ENCODE measurements at regions of chr5 and their contacts with region 1.

Region 1: DNA sequence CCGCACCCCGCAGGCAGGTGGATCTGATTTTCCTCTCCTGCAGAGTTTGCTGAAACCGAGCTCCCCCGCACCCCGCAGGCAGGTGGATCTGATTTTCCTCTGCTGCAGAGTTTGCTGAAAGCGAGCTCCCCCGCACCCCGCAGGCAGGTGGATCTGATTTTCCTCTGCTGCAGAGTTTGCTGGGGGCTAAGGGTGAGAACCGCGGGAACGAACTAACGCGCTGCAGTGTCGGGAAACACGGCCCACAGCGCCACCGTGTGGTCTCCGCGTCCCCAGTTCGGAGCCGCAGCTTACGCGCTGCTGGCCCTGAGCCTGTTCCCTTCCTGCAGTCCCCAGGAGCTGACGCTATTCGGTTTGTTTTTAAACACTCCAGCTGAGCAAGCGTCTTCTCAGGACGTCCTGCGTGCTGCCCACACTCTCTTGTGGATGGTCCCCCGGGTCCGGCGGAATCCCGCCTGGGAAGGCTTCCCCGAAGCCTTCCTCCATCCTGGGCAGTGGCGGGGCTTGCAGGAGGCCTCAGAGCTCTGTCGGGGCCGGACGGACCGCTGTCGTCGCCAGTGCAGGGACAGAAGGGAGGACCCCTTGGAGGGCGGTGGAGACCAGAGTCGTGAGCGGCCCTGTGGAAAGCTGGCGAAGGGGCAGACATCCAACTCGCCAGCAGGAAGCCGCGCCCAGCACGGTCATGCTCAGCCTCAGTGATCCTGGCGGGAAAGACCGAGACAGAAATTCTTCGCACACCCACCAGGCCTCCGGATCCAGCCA is 121.2 kb upstream of the LPCAT1 start:
- DNase-seq: peak; percentile 52
- H3K4me3 ChIP-seq: no peak overlapping the region
- H3K27ac ChIP-seq: no peak overlapping the region
- H3K27me3 ChIP-seq: peaks cover 38% of the 10 kb centered on the region
- CTCF ChIP-seq: peak; percentile 81

Region 2: GRCh38 chr5:932628-933250 is 712.3 kb before region 1 on chr5:
- CTCF ChIA-PET with region 1: interaction called, 12 read pairs
- POLR2A ChIA-PET with region 1: no interaction called
- DNase-seq: no peak
- H3K4me3 ChIP-seq: no peak overlapping the region
- H3K27ac ChIP-seq: no peak overlapping the region
- H3K27me3 ChIP-seq: peaks cover 28% of the 10 kb centered on the region
- CTCF ChIP-seq: no peak

Region 3: DNA sequence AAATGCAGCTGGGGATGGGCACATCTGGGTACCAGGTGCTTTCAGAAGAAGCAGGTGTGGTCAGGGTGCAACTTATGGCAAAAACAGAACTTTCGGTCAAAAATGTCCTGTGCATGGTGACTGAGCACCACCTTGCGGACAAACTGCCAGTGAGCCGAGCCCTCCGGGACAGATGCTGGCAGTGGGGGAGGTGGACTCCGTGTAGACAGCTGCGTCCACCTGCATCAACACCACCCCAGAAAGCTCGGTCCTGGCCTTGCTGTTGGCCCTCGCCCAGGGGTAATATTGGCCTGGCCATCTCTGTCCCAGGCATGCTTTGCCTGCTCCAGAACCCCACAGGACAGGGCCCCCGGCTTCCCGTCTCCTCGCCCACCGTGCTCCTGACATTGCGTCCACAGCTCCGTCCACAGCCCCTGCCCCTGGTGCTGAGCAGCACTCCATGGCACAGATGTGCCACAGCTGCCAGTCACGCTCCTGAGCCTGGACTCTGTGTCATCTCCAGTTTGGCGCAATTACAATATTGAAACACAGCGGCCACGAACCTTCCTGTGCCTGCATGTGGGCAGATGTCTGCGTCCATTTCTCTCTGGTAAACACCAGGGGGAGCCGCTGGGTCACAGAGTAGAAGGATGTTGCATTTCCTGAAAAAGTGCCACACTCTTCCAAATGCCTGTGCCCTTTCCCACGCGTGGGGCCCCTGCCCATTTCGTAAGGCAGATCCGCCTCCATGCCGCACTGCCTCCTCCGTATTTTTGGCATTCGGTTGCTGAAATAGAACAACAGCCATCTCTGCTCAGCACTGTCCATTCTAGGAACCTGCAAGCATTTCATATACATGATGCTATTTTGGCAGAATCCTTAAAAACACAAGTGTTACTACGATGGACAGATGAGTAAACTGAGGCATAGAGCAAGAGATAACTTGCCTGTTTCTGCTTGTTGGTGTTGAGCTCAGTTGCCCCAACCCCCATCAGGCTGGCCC is 477.0 kb before region 1 on chr5:
- CTCF ChIA-PET with region 1: interaction called, 23 read pairs
- POLR2A ChIA-PET with region 1: no interaction called
- DNase-seq: no peak
- H3K4me3 ChIP-seq: no peak overlapping the region
- H3K27ac ChIP-seq: no peak overlapping the region
- H3K27me3 ChIP-seq: peaks cover 6% of the 10 kb centered on the region
- CTCF ChIP-seq: peak; percentile 79

Region 4: GRCh38 chr5:1208743-1209506 is 436.1 kb before region 1 on chr5:
- CTCF ChIA-PET with region 1: interaction called, 14 read pairs
- POLR2A ChIA-PET with region 1: no interaction called
- DNase-seq: no peak
- H3K4me3 ChIP-seq: no peak overlapping the region
- H3K27ac ChIP-seq: no peak overlapping the region
- H3K27me3 ChIP-seq: peaks cover 10% of the 10 kb centered on the region
- CTCF ChIP-seq: peak; percentile 50

Region 5: DNA sequence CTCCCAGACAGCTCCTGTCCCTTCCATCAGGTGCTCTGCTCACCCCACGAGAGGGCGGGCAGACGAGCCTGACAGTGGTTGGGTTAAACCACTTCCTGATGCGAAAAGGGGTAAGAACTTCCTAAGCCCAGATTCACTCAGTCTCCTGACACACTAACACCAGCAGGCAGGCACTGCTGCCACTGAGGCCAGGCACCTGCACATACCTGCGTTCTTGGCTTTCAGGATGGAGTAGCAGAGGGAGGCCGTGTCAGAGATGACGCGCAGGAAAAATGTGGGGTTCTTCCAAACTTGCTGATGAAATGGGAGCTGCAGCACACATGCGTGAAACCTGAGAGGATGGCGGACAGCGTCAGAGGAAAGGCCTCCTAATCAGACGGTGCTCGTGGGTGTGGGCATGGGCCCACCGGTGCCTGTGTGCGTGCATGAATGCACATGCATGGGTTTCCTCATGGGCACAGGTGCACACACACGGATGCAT is 389.9 kb before region 1 on chr5:
- CTCF ChIA-PET with region 1: no interaction called
- POLR2A ChIA-PET with region 1: no interaction called
- DNase-seq: no peak
- H3K4me3 ChIP-seq: no peak overlapping the region
- H3K27ac ChIP-seq: no peak overlapping the region
- H3K27me3 ChIP-seq: no peaks in the 10 kb centered on the region
- CTCF ChIP-seq: no peak

Region 6: DNA sequence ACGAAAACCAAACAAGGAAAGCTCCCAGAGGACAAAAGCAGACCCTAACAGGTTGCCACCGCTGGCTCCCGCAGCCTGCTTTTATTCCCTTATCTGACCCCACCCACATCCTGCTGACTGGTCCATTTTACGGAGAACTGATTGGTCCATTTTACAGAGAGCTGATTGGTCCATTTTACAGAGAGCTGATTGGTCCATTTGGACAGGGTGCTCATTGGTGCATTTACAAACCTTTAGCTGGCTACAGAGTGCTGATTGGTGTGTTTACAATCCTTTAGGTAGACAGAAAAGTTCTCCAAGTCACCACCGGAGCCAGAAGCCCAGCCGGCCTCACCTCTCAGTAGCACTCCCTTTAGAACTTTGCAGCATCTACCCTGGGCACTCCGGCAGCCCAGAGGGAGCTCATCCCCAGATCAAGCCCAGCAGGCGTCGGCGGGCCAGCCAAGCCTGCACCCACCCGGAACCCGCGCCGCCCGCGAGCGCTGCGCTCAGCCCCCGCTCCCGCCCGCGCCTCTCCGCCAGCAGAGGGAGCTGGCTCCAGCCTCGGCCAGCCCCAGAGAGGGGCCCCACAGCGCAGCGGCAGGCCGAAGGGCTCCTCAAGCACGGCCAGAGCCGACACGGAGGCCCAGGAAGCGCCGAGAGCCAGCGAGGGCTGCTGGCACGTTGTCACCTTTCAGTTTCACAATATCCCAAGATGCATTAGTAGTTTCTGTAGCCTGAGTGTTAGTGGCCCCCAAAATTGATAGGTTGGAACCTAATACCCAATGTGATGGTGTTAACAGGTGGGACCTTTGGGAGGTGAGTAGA is 264.8 kb before region 1 on chr5:
- CTCF ChIA-PET with region 1: interaction called, 13 read pairs
- POLR2A ChIA-PET with region 1: no interaction called
- DNase-seq: no peak
- H3K4me3 ChIP-seq: no peak overlapping the region
- H3K27ac ChIP-seq: no peak overlapping the region
- H3K27me3 ChIP-seq: peaks cover 7% of the 10 kb centered on the region
- CTCF ChIP-seq: peak; percentile 46

Region 7: GRCh38 chr5:1479581-1480188 is 165.3 kb before region 1 on chr5:
- CTCF ChIA-PET with region 1: interaction called, 20 read pairs
- POLR2A ChIA-PET with region 1: no interaction called
- DNase-seq: no peak
- H3K4me3 ChIP-seq: no peak overlapping the region
- H3K27ac ChIP-seq: no peak overlapping the region
- H3K27me3 ChIP-seq: no peaks in the 10 kb centered on the region
- CTCF ChIP-seq: peak; percentile 63

Region 8: DNA sequence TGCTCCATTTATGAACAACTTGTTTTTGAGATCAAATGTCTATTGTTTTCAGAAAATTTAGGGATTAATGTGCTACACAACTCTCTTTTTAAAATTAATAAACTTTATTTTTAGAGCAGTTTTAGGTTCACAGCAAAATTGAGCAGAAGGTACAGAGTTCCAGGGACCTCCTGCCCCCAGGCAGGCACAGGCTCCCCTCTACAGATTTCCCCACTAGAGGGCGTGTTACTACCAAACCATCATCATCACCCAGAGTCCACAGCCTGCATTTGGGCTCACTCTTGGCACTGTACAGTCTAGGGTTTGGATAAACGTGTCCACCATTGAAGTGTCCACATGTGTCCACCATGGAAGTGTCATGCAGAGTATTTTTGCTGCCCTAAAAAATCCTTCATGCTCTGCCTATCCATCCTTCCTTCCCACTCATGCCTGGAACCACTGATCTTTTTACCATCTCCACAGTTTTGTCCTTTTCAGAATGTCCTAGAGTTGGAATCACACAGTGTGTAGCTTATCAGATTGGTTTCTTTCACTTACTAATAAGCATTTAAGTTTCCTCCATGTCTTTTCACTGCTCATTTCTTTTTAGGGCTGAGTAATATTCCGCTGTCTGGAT is 92.9 kb after region 1 on chr5:
- CTCF ChIA-PET with region 1: no interaction called
- POLR2A ChIA-PET with region 1: no interaction called
- DNase-seq: no peak
- H3K4me3 ChIP-seq: no peak overlapping the region
- H3K27ac ChIP-seq: no peak overlapping the region
- H3K27me3 ChIP-seq: peaks cover under 1% of the 10 kb centered on the region
- CTCF ChIP-seq: peak; percentile 53